CD8-positive, alpha-beta memory T cell (primary cell): ENCODE measurements at regions of chr17 and their contacts with region 1.

Region 1: GRCh38 chr17:31561469-31562375 is 170.2 kb downstream of the RAB11FIP4 start:
- DNase-seq: no peak
- H3K4me3 ChIP-seq: no peak overlapping the region
- H3K4me3 Mint-ChIP-seq: peak overlapping the region in 5 of 7 donors; percentile 34 to 84 (median 49)
- H3K27ac ChIP-seq: no peak overlapping the region
- H3K27ac Mint-ChIP-seq: peak overlapping the region in 1 of 8 donors; percentile 11
- H3K4me1 ChIP-seq: no peaks in the 10 kb centered on the region
- H3K4me1 Mint-ChIP-seq: peaks cover 8 to 12% (median 9%) of the 10 kb centered on the region in 3 donors
- H3K27me3 ChIP-seq: no peaks in the 10 kb centered on the region
- H3K27me3 Mint-ChIP-seq: peaks cover 15 to 27% of the 10 kb centered on the region in 2 donors

Region 2: DNA sequence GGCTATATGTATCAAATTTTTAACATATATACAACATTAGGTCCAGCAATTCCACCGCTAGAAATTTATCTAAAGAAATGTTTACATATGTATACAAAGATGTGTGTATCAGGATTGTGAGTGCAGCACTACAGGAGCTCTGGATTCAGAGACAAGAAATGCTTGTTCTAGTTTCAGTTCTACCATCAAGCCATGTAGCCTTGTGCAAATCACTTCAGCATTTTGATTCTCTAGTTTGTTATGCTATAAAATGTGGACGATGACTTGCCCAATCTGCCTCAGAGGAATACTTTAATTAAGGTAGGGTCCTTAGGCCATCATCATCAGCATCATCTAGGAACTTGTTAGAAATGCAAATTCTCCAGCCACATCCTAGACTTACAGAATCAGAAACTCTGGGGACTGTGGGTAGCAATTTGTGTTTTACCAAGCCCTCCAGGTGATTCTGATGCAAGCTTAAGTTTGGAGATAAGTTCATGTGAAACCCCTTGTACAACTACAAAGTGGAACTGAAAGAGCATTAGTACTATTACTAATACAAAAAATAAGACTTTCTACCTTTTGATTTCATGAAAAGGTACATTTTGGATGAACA is 1807.8 kb before region 1 on chr17:
- CTCF ChIA-PET with region 1: no interaction called
- POLR2A ChIA-PET with region 1: interaction called, 10 read pairs
- DNase-seq: no peak
- H3K4me3 ChIP-seq: no peak overlapping the region
- H3K4me3 Mint-ChIP-seq: no peak overlapping the region
- H3K27ac ChIP-seq: no peak overlapping the region
- H3K27ac Mint-ChIP-seq: peak overlapping the region in 3 of 8 donors; percentile 14 to 50 (median 21)
- H3K4me1 ChIP-seq: peaks cover 34% of the 10 kb centered on the region
- H3K4me1 Mint-ChIP-seq: peaks cover 29 to 72% (median 55%) of the 10 kb centered on the region in 3 donors
- H3K27me3 ChIP-seq: no peaks in the 10 kb centered on the region
- H3K27me3 Mint-ChIP-seq: no peaks in the 10 kb centered on the region